WTC11 (cell line): ENCODE measurements at regions of chr7 and their contacts with region 1.

Region 1: DNA sequence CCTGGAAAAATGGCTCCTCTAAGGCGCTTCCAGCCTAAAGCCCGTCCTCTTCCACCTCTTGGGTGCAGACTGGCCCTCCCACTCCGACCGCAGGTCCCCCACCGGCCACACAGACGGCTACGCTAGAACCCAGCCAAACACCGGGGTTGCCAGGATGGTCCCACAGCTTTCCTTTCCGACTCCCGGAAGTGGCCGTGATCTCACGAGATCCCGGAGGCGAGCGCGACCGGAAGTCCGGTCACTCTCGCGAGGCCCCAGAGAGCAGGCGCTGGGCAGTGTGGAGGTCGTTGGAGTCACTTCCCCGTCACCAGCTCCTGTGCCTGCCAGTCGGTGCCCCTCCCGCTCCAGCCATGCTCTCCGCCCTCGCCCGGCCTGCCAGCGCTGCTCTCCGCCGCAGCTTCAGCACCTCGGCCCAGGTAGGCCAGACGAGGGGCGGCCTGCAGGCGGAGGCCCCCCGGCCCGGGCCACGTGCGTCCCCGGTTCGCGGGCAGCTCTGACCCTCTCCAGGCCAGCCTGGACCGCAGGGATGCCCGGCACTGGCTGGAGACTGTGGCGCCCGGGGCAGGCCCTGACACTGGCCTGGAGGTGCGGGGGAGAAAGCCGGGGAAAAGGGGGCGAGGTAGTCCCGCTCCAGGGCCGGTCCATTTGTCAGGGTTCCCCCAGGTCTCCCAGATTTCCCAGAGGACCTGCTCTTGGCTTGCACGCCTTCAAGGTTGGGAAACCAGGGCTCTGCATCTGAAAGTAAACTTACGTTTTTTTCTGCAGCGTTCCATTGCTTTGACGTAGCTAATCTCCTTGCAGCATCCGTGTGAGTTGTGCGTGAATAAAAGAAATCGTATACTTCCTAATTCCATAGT is at the starts of genes MDH2 and STYXL1:
- DNase-seq: peak; percentile 94
- ATAC-seq: peak; percentile 96
- H3K4me3 Mint-ChIP-seq: peak within 1 kb of the TSS; percentile 99
- H3K27ac Mint-ChIP-seq: peak within 1 kb of the TSS; percentile 99
- H3K4me1 Mint-ChIP-seq: peaks cover 22% of the 10 kb centered on the region
- H3K27me3 Mint-ChIP-seq: no peaks in the 10 kb centered on the region
- CTCF ChIP-seq: no peak
- total RNA-seq, gene MDH2: 298 to 333 TPM (median 313 TPM) in 3 replicates
- total RNA-seq, gene STYXL1: 21.3 to 28.2 TPM (median 27.8 TPM) in 3 replicates

Region 2: GRCh38 chr7:76074954-76075335 is 26.9 kb after region 1 on chr7:
- CTCF ChIA-PET with region 1: interaction called, 13 read pairs
- POLR2A ChIA-PET with region 1: no interaction called
- DNase-seq: no peak
- ATAC-seq: no peak
- H3K4me3 Mint-ChIP-seq: no peak overlapping the region
- H3K27ac Mint-ChIP-seq: no peak overlapping the region
- H3K4me1 Mint-ChIP-seq: no peaks in the 10 kb centered on the region; the same call in 1 of the 2 replicates
- H3K27me3 Mint-ChIP-seq: no peaks in the 10 kb centered on the region; the same call in 1 of the 2 replicates
- CTCF ChIP-seq: no peak